ENCODE measurements at regions of chr18 and their contacts with region 1.

Region 1: GRCh38 chr18:41545091-41545888 is 409.7 kb upstream of the PIK3C3 start:
- DNase-seq: no peak
- ATAC-seq: no peak
- H3K4me3 ChIP-seq: no peak overlapping the region
- H3K27ac ChIP-seq: no peak overlapping the region
- H3K4me1 ChIP-seq: no peaks in the 10 kb centered on the region
- H3K27me3 ChIP-seq: peaks cover 0 to 2% (median 0%) of the 10 kb centered on the region in 3 donors
- CTCF ChIP-seq: no peak

Region 2: DNA sequence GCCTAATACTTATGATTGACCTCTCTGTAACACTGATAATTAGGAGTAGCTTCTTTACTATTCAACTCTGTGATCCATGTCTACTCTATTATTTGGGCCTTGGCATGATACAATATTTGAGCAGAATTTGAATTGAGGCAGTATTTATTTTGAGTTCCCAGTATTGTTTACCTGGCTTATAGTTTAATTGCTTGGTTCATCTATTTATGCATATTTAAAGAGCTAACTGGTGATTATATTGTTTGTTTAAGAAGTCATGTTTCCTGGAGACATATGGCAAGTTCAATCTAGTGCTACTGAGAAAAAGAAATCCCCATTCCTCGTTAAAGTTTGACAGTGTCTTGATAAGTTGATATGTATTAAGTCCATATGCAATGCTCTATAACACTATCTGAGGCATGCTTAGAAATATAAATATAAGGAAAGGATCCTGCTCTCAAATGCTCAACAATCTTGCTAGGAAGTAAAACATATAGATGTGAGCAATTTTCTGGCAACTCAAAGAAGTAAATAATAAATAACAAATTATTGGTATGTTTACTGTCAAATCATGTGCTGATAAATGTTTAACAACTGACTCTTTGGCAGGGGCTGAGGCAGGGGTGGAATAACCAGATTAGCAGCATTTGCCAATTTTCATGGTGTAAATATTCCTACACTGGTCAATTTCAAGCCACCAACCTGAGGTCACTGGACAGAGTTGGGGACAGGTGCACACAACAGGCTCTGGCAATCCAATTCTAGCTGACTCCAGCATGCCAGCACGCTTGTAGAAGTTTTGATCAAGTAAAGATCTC is 20.4 kb before region 1 on chr18:
- intact Hi-C with region 1: loop called in 1 of 2 experiments (anchors 2 kb)
- DNase-seq: no peak
- ATAC-seq: no peak
- H3K4me3 ChIP-seq: no peak overlapping the region
- H3K27ac ChIP-seq: no peak overlapping the region
- H3K4me1 ChIP-seq: no peaks in the 10 kb centered on the region
- H3K27me3 ChIP-seq: no peaks in the 10 kb centered on the region
- CTCF ChIP-seq: no peak

Measured in psoas muscle (tissue), 8 donors.